Mammary epithelial cell (primary cell): ENCODE measurements at regions of chr19 and their contacts with region 1.

Region 1: GRCh38 chr19:58386576-58387337 is at the start of gene RPS5:
- DNase-seq: peak; percentile 98
- H3K4me3 ChIP-seq: peak within 1 kb of the TSS; percentile 72 to 86 (median 85)
- H3K27ac ChIP-seq: peak within 1 kb of the TSS; percentile 82
- H3K4me1 ChIP-seq: peaks cover 28% of the 10 kb centered on the region
- H3K27me3 ChIP-seq: no peaks in the 10 kb centered on the region
- CTCF ChIP-seq: no peak
- total RNA-seq, gene RPS5: 916 to 1,060 TPM

Region 2: DNA sequence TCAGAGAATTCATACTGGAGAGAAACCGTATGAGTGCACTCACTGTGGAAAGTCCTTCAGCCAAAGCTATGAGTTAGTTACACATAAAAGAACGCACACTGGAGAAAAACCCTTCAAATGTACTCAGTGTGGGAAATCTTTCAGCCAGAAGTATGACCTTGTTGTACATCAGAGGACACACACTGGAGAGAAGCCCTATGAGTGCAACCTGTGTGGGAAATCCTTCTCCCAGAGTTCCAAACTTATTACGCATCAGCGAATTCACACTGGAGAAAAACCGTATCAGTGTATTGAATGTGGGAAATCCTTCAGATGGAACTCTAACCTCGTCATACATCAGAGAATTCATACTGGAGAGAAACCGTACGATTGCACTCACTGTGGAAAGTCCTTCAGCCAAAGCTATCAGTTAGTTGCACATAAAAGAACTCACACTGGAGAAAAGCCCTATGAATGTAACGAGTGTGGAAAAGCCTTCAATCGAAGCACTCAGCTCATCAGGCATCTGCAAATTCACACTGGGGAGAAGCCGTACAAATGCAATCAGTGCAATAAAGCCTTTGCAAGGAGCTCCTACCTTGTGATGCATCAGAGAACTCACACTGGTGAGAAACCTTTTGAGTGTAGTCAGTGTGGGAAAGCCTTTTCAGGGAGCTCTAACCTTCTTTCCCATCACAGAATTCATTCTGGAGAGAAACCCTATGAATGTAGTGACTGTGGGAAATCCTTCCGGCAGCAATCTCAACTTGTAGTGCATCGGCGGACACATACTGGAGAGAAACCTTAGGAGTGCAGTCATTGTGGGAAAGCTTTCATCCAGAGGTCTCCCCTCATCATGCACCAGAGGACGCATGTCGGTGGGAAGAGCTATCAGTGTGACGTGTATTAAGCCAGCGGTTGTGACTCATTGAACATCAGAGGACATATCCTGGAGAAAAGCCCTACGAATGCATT is 124.5 kb before region 1 on chr19:
- CTCF ChIA-PET with region 1: no interaction called
- dilution Hi-C with region 1: no loop called
- in situ Hi-C with region 1: no loop called
- intact Hi-C with region 1: no loop called
- DNase-seq: peak; percentile 6
- H3K4me3 ChIP-seq: no peak overlapping the region
- H3K27ac ChIP-seq: no peak overlapping the region
- H3K4me1 ChIP-seq: no peaks in the 10 kb centered on the region
- H3K27me3 ChIP-seq: no peaks in the 10 kb centered on the region
- CTCF ChIP-seq: no peak

Region 3: GRCh38 chr19:58305065-58305931 is 81.5 kb before region 1 on chr19 and contains the start of gene ERVK3-1:
- CTCF ChIA-PET with region 1: no interaction called
- dilution Hi-C with region 1: no loop called
- in situ Hi-C with region 1: no loop called
- intact Hi-C with region 1: loop called (anchors 5 kb)
- DNase-seq: peak; percentile 94
- H3K4me3 ChIP-seq: peak within 1 kb of the TSS; percentile 76 to 94 (median 92)
- H3K27ac ChIP-seq: peak within 1 kb of the TSS; percentile 61
- H3K4me1 ChIP-seq: peaks cover 3% of the 10 kb centered on the region
- H3K27me3 ChIP-seq: no peaks in the 10 kb centered on the region
- CTCF ChIP-seq: peak in 1 of 2 donors; percentile 22
- total RNA-seq, gene ERVK3-1: 29.5 to 37.7 TPM

Region 4: GRCh38 chr19:58362272-58362994 is 24.3 kb before region 1 on chr19 and contains the start of gene ZNF497:
- CTCF ChIA-PET with region 1: no interaction called
- dilution Hi-C with region 1: no loop called
- in situ Hi-C with region 1: no loop called
- intact Hi-C with region 1: loop called (anchors 1 kb)
- DNase-seq: peak; percentile 94
- H3K4me3 ChIP-seq: peak within 1 kb of the TSS; percentile 61 to 83 (median 64)
- H3K27ac ChIP-seq: peak within 1 kb of the TSS; percentile 84
- H3K4me1 ChIP-seq: peaks cover 8% of the 10 kb centered on the region
- H3K27me3 ChIP-seq: no peaks in the 10 kb centered on the region
- CTCF ChIP-seq: no peak
- total RNA-seq, gene ZNF497: 0.83 to 1.1 TPM